ENCODE measurements at regions of chr1 and their contacts with region 1.

Region 1: GRCh38 chr1:236534151-236534651 is 10.4 kb downstream of the LGALS8 start:
- DNase-seq: peak; percentile 36
- ATAC-seq: peak; percentile 25; the same call in 1 of the 2 replicates
- H3K4me3 ChIP-seq: no peak overlapping the region
- H3K27ac ChIP-seq: no peak overlapping the region
- H3K4me1 ChIP-seq: peaks cover 18% of the 10 kb centered on the region
- H3K27me3 ChIP-seq: no peaks in the 10 kb centered on the region
- CTCF ChIP-seq: no peak

Region 2: DNA sequence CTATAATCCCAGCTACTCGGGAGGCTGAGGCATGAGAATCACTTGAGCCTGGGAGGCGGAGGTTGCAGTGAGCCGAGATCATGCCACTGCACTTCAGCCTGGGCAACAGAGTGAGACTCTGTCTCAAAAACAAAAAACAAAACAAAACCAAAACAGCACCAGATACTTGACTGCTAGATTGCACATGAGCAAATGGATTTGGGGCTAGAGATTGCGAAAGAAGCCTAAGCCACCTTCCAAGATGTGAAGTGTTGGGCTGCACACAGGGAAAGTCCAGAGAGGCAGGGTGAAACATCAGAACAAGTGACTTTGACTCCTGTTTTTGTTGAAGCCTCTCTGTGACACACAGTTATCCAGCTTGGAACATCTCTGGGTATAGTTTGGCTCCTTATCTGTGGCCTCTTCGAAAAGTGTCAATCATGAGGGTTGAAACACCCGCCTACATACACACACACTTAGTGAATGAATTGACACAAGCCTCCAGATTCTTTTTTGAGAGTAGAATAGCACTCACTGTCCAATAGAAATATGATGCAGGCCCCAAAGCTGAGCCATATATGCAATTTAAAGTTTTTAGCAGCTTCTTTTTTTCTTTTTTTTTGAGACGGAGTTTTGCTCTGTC is 426.1 kb before region 1 on chr1:
- CTCF ChIA-PET with region 1: no interaction called
- POLR2A ChIA-PET with region 1: no interaction called
- intact Hi-C with region 1: loop called (anchors 1 kb)
- DNase-seq: no peak
- ATAC-seq: no peak
- H3K4me3 ChIP-seq: no peak overlapping the region
- H3K27ac ChIP-seq: no peak overlapping the region
- H3K4me1 ChIP-seq: no peaks in the 10 kb centered on the region
- H3K27me3 ChIP-seq: no peaks in the 10 kb centered on the region
- CTCF ChIP-seq: no peak

Region 3: DNA sequence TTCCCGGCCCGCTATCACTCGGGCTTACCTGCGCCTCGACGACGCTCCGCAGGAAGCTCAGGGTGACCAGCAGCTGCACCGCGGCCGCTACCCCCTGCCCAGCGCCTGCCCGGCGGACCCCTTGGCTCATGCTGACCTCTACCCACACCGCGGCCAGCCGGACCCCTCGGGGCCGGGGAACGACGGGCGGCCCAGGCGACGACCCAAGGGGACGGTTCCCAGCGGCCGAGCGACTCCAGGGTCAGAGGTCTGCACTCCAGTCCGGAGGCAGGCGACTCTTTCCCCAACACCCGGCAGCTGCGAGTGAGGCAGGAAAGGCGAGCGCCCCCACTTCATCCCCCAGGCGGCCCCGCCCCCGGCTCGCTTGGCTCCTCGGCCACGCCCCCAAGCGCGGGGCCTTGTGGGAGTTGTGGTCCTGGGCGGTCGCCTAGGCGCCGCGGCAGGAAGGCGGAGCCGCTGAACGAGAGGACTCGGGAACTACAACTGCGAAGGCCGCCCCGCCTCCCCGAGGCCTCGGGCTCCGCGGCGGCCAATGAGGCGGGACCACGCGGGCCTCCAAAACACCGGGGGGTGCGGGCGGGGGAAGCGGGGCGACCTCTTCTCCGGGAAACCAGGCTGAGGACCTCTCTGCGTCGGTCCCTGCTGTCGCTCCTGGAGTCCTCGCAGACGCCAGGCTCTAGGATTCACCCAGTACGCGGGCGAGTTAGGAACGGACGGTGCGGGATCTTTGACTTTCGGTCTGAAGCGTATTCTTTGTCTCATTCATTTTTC is 252.4 kb before region 1 on chr1 and contains the start of gene ERO1B:
- CTCF ChIA-PET with region 1: no interaction called
- POLR2A ChIA-PET with region 1: no interaction called
- intact Hi-C with region 1: loop called (anchors 5 kb)
- DNase-seq: peak; percentile 92
- ATAC-seq: peak; percentile 95
- H3K4me3 ChIP-seq: peak within 1 kb of the TSS; percentile 84
- H3K27ac ChIP-seq: no peak within 1 kb of the TSS
- H3K4me1 ChIP-seq: peaks cover 7% of the 10 kb centered on the region; the same call in 1 of the 2 replicates
- H3K27me3 ChIP-seq: no peaks in the 10 kb centered on the region
- CTCF ChIP-seq: no peak
- total RNA-seq, gene ERO1B: 0.46 and 0.95 TPM in 2 replicates

Region 4: DNA sequence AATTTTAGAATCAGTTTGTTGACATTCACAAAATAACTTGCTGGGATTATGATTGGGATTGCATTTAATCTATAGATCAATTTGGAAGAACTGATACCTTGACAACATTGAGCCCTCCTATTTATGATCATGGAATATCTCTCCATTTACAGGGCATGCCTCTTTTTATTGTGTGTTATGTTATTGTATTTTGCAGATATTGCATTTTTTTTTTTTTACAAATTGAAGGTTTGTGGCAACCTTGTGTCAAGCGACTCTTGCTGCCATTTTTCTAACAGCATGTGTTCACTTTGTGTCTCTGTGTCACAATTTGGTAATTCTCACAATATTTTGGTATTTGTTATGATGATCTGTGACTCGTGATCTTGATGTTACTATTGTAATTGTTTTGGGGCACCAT is 93.8 kb before region 1 on chr1:
- CTCF ChIA-PET with region 1: no interaction called
- POLR2A ChIA-PET with region 1: no interaction called
- intact Hi-C with region 1: no loop called
- DNase-seq: no peak
- ATAC-seq: no peak
- H3K4me3 ChIP-seq: no peak overlapping the region
- H3K27ac ChIP-seq: no peak overlapping the region
- H3K4me1 ChIP-seq: no peaks in the 10 kb centered on the region
- H3K27me3 ChIP-seq: no peaks in the 10 kb centered on the region; the same call in 1 of the 2 replicates
- CTCF ChIP-seq: no peak

Region 5: DNA sequence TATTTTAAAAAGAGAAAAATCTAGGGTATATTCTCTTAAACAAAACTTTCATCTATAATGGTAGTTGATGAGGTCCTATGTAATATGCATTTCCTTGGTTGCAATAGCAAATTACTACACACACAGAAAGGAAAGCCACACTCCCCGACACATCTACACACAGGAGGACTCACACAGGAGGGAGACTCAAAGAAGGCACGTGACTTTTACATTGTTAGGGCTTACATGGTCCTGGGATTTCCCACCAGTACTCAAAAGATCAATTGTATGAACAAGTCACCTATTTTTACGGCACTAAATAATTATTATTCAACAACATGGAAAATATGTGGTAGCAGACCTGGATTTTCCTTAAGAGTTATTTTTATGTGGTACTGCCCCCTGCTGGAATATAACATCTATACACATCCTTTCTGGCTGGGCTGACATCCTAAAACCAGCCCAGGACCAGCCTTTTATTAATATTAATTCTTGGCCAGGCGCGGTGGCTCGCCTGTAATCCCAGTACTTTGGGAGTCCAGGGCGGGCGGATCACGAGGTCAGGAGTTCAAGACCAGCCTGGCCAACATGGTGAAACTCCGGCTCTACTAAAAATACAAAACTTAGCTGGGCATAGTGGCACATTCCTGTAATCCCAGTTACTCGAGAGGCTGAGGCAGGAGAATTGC is 44.4 kb before region 1 on chr1:
- CTCF ChIA-PET with region 1: no interaction called
- POLR2A ChIA-PET with region 1: no interaction called
- intact Hi-C with region 1: loop called (anchors 5 kb)
- DNase-seq: peak; percentile 66
- ATAC-seq: peak; percentile 71
- H3K4me3 ChIP-seq: no peak overlapping the region
- H3K27ac ChIP-seq: no peak overlapping the region
- H3K4me1 ChIP-seq: no peaks in the 10 kb centered on the region
- H3K27me3 ChIP-seq: no peaks in the 10 kb centered on the region
- CTCF ChIP-seq: peak; percentile 60

Region 6: GRCh38 chr1:236502885-236503639 is 31.1 kb before region 1 on chr1:
- CTCF ChIA-PET with region 1: no interaction called
- POLR2A ChIA-PET with region 1: interaction called, 13 read pairs
- intact Hi-C with region 1: no loop called
- DNase-seq: peak; percentile 85
- ATAC-seq: peak; percentile 86
- H3K4me3 ChIP-seq: peak overlapping the region; percentile 45; the same call in 1 of the 2 replicates
- H3K27ac ChIP-seq: peak overlapping the region; percentile 86
- H3K4me1 ChIP-seq: peaks cover 15% of the 10 kb centered on the region
- H3K27me3 ChIP-seq: no peaks in the 10 kb centered on the region
- CTCF ChIP-seq: no peak

Region 7: DNA sequence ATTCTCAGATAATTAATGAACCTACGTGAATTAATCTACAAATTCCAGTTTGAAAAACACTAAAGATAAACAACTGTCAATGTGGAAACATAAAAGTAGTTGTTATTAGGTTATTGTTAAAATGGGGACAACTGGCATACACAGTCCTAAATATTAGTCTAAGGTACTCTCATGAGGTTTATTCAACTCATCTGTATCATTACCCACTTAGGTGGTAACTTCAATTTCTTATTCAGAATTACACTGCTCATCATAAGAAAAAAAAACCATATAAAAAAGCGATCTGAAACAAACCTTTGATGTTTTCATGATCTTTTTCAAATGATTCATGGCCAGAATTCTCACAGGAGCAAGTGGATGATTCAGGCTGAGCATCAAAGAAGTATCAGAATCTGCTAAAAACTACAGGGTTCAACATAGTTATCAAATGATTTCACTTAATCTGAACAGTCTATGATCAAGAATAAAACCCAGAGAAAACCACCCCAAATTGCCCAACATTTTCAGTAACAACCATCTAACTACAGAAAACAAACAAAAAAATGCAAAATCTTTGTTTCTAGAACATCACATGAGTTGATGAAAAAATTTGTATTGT is 56.5 kb after region 1 on chr1:
- CTCF ChIA-PET with region 1: no interaction called
- POLR2A ChIA-PET with region 1: no interaction called
- intact Hi-C with region 1: no loop called
- DNase-seq: no peak
- ATAC-seq: no peak
- H3K4me3 ChIP-seq: no peak overlapping the region
- H3K27ac ChIP-seq: no peak overlapping the region
- H3K4me1 ChIP-seq: no peaks in the 10 kb centered on the region
- H3K27me3 ChIP-seq: no peaks in the 10 kb centered on the region
- CTCF ChIP-seq: no peak

Measured in PC-3 (cell line).